Gastrocnemius medialis (tissue), 4 donors: ENCODE measurements at regions of chr13 and their contacts with region 1.

Region 1: DNA sequence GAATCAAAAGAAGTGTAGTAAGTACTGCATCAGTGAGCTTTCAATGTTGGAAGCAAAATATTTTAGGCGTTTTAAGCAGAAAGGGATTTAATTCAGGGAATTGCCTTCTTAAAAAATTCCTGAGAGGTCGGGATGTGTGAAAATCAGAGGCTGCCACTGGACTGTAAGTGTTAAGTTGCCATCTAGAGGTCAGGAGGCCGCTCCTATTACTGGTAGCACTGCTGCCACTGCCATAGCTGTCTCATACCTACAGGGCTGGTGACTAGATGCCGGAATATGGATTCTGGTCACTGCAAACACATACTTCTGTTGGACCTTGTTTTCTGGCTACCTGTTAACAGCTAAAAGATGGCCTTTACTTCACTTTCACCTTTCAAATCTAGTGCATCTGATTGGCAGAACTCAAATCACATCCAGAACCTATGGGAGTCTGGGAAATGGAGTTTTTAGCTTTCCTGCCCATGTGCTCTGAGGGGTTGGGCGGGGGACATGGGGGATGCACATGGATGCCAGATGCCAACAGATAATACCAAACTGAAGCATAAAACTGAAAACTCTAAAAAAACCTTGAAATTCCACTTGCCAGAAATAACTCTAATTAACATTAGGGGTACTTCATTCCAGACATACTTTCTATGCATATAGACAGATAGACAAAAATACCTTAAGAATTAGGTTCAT is 29.8 kb downstream of the DGKH start:
- DNase-seq: no peak
- ATAC-seq: peak; percentile 60 to 72
- H3K4me3 ChIP-seq: no peak overlapping the region
- H3K27ac ChIP-seq: no peak overlapping the region
- H3K4me1 ChIP-seq: peaks cover 0 to 6% of the 10 kb centered on the region in 2 donors
- H3K27me3 ChIP-seq: no peaks in the 10 kb centered on the region
- CTCF ChIP-seq: peak in 1 of 5 experiments; percentile 45
- POLR2A ChIP-seq: no peak

Region 2: GRCh38 chr13:41384755-41385503 is 693.3 kb before region 1 on chr13:
- in situ Hi-C with region 1: no loop called
- intact Hi-C with region 1: no loop called
- DNase-seq: no peak
- ATAC-seq: no peak
- H3K4me3 ChIP-seq: no peak overlapping the region
- H3K27ac ChIP-seq: no peak overlapping the region
- H3K4me1 ChIP-seq: no peaks in the 10 kb centered on the region
- H3K27me3 ChIP-seq: no peaks in the 10 kb centered on the region
- CTCF ChIP-seq: peak in 2 of 5 experiments; percentile 24 to 40
- POLR2A ChIP-seq: no peak

Region 3: GRCh38 chr13:41788552-41788951 is 289.7 kb before region 1 on chr13:
- in situ Hi-C with region 1: no loop called
- intact Hi-C with region 1: no loop called
- DNase-seq: no peak
- ATAC-seq: no peak
- H3K4me3 ChIP-seq: no peak overlapping the region
- H3K27ac ChIP-seq: no peak overlapping the region
- H3K4me1 ChIP-seq: peaks cover 0 to 12% of the 10 kb centered on the region in 2 donors
- H3K27me3 ChIP-seq: no peaks in the 10 kb centered on the region
- CTCF ChIP-seq: no peak
- POLR2A ChIP-seq: no peak

Region 4: DNA sequence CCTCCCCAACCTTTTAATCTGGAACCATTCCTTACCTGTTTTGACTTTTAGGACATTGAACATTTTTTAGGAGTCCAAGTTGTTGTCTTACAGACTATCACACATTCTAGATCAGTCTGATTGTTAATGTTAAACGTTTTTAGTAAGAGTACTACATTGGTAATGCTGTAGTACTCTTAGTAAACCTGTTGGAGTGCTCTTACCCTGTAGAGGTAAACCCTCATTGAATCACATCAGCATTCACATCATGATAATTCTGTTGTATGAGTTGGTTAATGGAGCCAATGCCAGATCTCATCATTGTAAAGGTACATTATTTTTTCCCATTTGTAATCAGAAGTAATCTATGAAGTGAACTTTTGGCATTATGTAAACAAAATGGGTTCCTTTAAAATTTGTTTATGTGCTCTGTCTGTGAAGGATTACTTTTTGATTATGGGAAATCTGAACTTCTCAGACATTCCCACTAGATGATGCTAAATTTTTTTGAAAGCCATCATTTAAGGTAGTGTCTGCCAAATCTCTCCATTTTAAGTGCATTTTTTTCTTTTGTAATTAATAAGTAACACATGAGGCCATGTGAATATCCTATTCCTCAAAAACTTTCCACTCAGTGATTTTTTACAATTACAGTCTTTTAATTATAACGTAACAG is 172.5 kb before region 1 on chr13:
- in situ Hi-C with region 1: loop called in 1 of 4 experiments (anchors 25 kb)
- intact Hi-C with region 1: loop called (anchors 10 kb)
- DNase-seq: no peak
- ATAC-seq: peak; percentile 74 to 75
- H3K4me3 ChIP-seq: no peak overlapping the region
- H3K27ac ChIP-seq: no peak overlapping the region
- H3K4me1 ChIP-seq: no peaks in the 10 kb centered on the region
- H3K27me3 ChIP-seq: no peaks in the 10 kb centered on the region
- CTCF ChIP-seq: peak; percentile 22 to 70 (median 61)
- POLR2A ChIP-seq: no peak

Region 5: DNA sequence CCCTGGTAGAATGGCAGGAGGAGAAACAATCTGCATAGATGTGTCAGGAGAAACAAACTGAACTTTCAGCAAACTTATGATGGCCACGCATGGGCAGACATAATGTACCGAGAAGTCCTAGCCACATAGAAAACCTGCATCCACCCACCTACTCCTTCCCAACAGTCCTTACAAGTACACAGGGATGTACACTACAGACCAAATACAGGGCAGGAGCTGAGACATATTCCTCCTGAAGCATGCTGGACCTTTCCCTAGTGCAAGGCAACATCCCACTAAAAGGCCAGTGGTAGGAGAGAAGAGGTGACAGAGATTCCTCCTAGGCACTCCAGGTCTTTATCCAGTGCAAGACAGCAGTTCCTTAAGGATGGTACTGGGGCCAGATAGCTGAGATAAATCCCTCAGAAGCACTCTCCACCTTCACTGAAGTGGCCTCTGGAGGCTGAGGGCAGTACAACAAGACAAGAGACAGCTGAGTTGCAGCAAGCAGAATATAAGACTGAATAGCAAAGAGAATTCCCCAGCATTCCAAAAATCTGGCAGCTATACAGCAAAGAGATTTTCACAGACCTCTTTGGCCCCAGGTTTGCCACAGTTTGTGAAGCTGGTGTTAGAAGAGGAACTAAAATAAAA is 135.7 kb before region 1 on chr13:
- in situ Hi-C with region 1: no loop called
- intact Hi-C with region 1: no loop called
- DNase-seq: peak in 1 of 2 donors; percentile 50
- ATAC-seq: peak; percentile 62 to 79
- H3K4me3 ChIP-seq: no peak overlapping the region
- H3K27ac ChIP-seq: peak overlapping the region in 3 of 4 donors; percentile 2 to 71 (median 70)
- H3K4me1 ChIP-seq: peaks cover 28 to 42% of the 10 kb centered on the region in 2 donors
- H3K27me3 ChIP-seq: no peaks in the 10 kb centered on the region
- CTCF ChIP-seq: peak in 2 of 5 experiments; percentile 15 to 23
- POLR2A ChIP-seq: no peak

Region 6: DNA sequence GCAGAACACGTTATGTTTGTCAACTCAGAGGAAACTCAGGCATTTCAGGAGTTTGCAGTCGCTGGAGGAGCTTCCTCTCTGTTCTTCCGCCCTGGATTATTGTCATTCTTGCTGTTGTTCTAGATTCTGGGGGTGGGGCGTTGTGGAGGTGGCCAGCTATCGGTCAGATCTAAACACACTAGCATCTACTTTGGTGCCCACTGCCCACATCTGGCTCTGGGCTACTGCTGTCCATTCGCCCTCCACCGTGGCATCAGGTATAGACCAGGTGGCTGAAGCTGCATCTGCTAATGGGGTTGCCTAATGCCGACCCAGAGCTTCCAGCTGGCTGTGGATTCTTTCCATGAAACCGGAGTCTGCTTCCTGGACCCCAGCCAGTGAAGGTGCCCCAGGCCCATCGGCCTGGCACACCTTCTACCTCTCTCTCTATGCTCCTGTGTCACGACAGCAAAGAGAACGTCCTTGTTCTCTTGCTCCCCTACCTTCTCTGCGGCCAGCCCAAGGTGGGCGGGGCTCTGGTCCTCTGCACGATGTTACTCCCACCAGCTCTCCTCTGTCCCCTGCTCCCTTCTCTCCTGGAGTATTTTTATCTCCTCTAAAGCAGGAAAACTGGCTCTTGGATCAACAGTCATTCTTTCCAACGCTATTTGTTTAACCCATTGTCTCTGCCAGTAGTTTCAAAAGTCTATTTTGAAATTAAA is 66.4 kb before region 1 on chr13:
- in situ Hi-C with region 1: no loop called
- intact Hi-C with region 1: loop called (anchors 10 kb)
- DNase-seq: no peak
- ATAC-seq: no peak
- H3K4me3 ChIP-seq: peak overlapping the region; percentile 4 to 42 (median 22)
- H3K27ac ChIP-seq: no peak overlapping the region
- H3K4me1 ChIP-seq: peaks cover 0 to 5% of the 10 kb centered on the region in 2 donors
- H3K27me3 ChIP-seq: no peaks in the 10 kb centered on the region
- CTCF ChIP-seq: no peak
- POLR2A ChIP-seq: no peak

Region 7: DNA sequence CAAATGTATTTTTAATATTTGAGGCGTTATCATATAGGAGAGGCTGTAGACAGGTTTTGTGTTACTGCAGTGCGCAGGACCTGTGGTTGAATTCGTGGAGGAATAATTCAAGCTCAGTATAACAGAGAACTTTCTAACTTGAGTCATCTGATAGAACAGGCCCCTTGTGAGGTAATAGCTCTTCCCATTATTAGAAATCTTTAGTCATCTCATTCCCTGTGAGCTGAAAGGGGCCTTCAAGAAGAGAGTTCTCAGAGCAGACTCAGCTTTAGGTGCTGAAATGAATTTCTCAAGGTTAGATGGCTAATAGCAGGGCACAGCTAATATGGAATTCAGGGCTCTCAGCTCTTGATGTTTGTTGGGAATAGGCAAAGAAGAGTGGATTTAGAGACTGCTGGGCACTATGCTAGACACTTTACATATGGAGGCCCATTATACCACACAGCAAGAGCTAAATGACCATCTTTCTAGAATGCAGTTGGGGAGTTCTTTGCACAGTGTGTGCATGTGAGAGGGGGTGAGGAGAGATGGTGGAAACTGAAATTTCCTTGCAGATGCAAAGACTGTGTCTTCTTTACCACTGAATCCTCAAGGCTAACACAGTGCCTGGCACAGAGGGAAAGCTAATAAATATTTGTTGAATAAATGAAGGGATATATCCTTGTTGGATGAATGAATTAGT is 59.7 kb after region 1 on chr13:
- in situ Hi-C with region 1: loop called in 1 of 4 experiments (anchors 10 kb)
- intact Hi-C with region 1: no loop called
- DNase-seq: no peak
- ATAC-seq: no peak
- H3K4me3 ChIP-seq: no peak overlapping the region
- H3K27ac ChIP-seq: no peak overlapping the region
- H3K4me1 ChIP-seq: no peaks in the 10 kb centered on the region
- H3K27me3 ChIP-seq: no peaks in the 10 kb centered on the region
- CTCF ChIP-seq: no peak
- POLR2A ChIP-seq: no peak

Region 8: DNA sequence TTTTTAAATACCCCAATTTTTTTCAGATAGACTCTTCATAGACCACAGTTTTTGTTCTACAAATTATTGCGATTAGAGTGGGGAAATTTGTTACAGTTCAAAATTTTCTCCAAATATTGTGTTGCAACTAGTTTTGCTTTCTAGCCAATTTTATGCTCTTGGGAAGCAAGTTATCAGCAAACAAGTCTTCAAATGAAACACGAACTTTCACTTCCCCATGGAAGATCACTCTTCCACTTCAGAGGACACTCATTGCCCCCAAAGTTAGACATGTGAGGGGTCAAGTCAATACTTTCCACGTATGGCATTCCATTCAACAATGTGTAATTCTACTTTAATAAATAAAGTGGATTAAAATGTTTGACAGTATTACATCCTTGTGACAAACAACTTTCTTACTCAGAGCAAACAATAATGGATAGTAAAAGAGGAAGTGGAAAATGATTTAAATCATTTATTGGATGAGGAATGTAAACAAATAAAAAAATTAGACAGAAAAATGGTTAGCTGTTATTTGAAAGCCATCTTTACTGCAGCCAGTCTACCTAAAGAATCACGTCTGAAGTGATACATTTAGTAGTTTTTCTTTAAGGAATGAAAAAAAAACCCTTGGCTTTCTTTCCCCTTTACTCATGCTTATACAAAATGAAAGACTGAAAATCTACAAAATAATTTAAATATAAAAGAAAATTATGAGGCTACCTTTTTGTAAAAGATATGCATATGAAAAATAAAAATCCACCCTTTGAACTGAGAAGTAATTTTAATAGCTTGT is 454.5 kb after region 1 on chr13:
- in situ Hi-C with region 1: no loop called
- intact Hi-C with region 1: no loop called
- DNase-seq: no peak
- ATAC-seq: no peak
- H3K4me3 ChIP-seq: no peak overlapping the region
- H3K27ac ChIP-seq: no peak overlapping the region
- H3K4me1 ChIP-seq: no peaks in the 10 kb centered on the region
- H3K27me3 ChIP-seq: no peaks in the 10 kb centered on the region
- CTCF ChIP-seq: no peak
- POLR2A ChIP-seq: no peak